GM23248 (cell line): ENCODE measurements at regions of chr7 and their contacts with region 1.

Region 1: GRCh38 chr7:87148332-87148955 is 3.8 kb upstream of the DMTF1 start:
- DNase-seq: peak; percentile 69
- H3K4me3 ChIP-seq: no peak overlapping the region
- H3K27ac ChIP-seq: no peak overlapping the region
- H3K4me1 ChIP-seq: no peaks in the 10 kb centered on the region; the same call in 1 of the 2 replicates
- H3K27me3 ChIP-seq: no peaks in the 10 kb centered on the region

Region 2: DNA sequence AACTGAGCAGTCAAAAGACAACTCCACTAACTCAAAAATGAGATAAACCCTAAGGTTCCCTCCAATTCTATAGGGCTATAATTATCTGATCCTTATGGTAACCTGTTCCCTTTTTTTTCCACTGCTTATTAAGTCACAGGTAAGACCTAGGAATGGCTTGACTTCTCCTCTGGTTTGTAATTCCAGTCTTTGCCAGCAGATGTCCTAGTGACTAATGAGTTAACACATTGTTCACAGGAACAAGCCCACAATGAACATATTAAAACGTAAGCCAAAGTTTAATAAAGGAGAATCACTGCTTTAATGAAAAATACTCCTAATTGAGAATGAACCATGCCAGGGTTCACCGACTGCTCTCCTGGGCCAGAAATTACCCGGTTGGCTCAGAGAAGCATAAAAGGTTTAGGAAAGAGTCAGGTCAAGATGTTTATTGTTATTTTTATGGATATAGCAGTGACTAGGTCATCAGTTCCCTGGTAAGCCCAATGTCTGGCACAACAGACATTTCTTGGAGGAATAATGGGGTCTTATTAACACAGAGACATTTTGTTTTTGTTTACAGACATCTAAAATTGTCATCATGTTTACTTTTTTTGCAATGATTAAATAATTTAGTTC is 209.1 kb before region 1 on chr7:
- in situ Hi-C with region 1: loop called (anchors 25 kb)
- DNase-seq: peak; percentile 70
- H3K4me3 ChIP-seq: no peak overlapping the region
- H3K27ac ChIP-seq: no peak overlapping the region
- H3K4me1 ChIP-seq: peaks cover 8% of the 10 kb centered on the region
- H3K27me3 ChIP-seq: no peaks in the 10 kb centered on the region